Dendritic cell treated with granulocyte-macrophage colony-stimulating factor and Interleukin-4, amounts not matched to agents 40 ng/mL and 50 ng/mL, for 4 days (primary cell): ENCODE measurements at regions of chr1 and their contacts with region 1.

Region 1: GRCh38 chr1:203861379-203862184 is at the start of gene SNRPE:
- H3K4me3 Mint-ChIP-seq: peak within 1 kb of the TSS; percentile 98
- H3K27ac Mint-ChIP-seq: peak within 1 kb of the TSS; percentile 94
- H3K4me1 Mint-ChIP-seq: peaks cover 21% of the 10 kb centered on the region
- H3K27me3 Mint-ChIP-seq: no peaks in the 10 kb centered on the region

Region 2: DNA sequence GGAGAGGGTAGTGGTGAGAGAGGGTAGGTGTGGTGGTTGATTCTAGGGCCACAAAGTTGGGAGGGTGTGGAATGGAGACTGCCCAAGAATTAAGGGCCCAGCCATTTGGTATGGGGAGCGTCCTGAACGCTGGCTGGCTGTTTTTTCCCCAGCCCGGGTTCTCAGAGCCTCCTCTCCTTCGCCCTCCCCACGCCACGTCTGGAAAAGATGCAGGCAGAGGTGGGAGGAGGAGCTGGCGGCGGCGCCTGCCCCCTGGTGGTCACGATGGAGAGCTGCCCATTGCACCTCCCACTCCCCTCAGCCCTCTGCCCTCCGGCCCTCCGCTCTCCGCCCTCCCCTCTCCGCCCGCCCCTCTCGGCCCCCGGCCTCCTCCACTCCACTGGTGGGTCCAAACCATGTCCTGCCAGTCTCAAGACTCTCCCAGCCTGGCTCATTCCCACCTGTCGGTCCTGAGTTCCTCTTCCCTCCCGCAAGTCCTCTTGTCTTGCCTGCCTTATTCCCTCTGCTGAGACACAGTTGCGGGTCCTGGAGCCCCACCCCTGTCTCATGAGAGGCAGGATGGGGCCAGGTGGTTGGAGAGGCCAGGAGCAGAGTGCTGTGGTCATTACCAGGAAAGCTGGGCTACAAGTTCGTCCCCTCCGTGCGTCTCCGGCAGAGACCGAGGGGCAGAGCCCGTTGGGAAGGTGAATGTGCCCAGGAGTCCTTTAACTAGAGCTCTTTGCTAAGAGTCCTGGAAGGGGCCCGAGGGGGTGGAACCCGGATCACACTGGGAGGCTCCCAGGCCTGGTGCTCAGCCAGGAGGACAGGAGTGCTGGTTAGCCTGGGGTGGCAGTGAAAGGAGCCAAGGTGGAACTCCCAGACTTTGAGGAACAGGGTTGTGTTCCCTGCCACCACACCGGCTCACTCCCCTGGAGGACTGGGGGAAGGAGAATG is 267.6 kb after region 1 on chr1:
- intact Hi-C with region 1: loop called (anchors 1 kb)
- H3K4me3 Mint-ChIP-seq: peak overlapping the region; percentile 49
- H3K27ac Mint-ChIP-seq: peak overlapping the region; percentile 41
- H3K4me1 Mint-ChIP-seq: peaks cover 11% of the 10 kb centered on the region
- H3K27me3 Mint-ChIP-seq: peaks cover 11% of the 10 kb centered on the region

Region 3: DNA sequence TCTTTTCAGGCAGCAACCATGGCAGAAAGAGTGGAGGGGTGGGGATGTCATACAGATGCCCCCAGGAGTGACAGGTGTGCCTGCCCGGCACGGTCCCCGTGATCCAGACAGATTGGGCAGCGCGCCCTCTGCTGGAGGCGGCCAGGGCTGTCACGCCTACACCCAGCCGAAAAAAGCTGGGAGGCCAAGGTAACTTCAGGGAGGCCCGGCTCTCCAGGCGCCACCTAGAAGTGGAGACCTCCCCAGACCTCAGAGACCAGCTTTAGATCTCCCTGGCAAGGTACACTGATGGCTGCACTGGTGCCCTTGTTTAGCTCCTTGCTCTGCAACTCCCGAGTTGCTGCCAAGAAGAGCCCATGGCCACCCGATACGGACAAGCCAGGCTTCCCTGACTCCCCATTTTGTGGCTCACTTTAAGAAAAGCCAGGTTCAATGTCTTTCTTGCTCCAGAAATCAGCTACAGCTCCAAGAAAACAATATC is 345.6 kb after region 1 on chr1:
- intact Hi-C with region 1: loop called (anchors 5 kb)
- H3K4me3 Mint-ChIP-seq: no peak overlapping the region
- H3K27ac Mint-ChIP-seq: no peak overlapping the region
- H3K4me1 Mint-ChIP-seq: no peaks in the 10 kb centered on the region
- H3K27me3 Mint-ChIP-seq: peaks cover 27% of the 10 kb centered on the region